ENCODE measurements at regions of chr7 and their contacts with region 1.

Region 1: DNA sequence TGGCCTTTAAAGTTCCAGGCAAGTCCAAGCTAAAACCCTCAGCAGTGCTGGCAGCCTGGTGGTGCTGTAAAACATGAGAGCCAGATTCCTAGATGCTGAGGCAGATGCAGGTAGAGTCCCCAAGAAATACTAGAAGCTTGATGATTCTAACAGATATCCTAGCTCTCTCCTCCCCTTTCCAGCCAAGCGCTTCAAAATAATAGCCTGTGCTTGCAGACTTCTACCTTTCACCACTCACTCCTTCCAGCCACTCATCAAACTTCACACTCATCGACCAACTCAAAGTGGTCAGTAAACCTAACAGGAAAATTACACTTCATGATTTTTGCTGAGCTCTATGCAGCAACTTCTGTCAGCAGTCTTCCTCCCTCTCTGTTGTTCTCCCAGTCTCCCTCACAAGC is 50.2 kb downstream of the LMBR1 start:
- DNase-seq: no peak
- H3K4me3 ChIP-seq: no peak overlapping the region
- H3K27me3 ChIP-seq: no peaks in the 10 kb centered on the region
- CTCF ChIP-seq: no peak

Region 2: DNA sequence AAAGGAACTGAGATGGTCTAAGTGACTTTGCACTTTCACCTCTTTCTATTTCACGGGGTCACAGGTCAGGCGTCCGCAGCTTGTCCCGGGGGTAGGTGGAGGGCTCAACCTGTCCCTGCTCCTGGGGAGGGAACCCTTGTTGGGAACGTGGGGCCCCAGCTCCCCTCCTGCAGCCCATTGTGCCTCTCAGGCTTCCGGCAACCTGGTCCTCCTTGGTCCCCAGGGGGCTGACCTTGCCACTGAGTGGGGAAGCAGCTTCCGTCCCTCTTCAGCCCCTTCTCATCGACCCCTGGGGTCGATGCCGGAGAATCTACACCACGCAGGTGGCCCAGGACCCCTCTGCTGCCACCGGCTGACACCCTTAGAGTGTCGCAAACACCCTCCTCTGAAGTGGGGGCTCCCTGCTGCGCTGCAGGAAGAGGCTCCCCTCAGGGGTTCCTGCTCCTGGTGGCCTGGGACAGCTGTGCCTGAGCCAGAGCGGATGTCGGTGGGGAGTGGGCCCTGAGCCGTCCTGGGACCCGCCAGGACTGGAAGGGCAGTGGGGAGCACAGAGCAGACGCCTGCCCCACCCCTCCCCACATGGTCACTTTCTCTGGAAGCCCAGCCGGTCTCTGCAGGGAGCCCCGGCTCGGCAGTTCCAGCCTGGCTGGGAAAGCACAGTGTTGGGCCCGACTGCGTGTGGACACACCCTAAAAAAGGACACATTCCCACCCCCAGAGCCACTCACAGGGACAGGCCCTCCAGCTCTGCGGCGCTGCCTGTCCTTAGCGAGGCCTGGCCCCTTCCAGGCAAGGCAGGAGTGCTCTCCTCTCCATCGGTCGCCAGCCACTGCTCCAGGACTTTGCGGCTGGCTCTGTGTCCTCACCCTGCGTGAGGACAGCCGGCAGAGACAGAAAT is 673.0 kb before region 1 on chr7:
- CTCF ChIA-PET with region 1: no interaction called
- POLR2A ChIA-PET with region 1: interaction called, 17 read pairs
- DNase-seq: no peak
- H3K4me3 ChIP-seq: no peak overlapping the region
- H3K27me3 ChIP-seq: no peaks in the 10 kb centered on the region
- CTCF ChIP-seq: no peak

Region 3: GRCh38 chr7:156460858-156461627 is 381.7 kb before region 1 on chr7:
- CTCF ChIA-PET with region 1: no interaction called
- POLR2A ChIA-PET with region 1: no interaction called
- DNase-seq: no peak
- H3K4me3 ChIP-seq: no peak overlapping the region
- H3K27me3 ChIP-seq: no peaks in the 10 kb centered on the region
- CTCF ChIP-seq: no peak

Measured in BJ (cell line).